CD4-positive, alpha-beta memory T cell (primary cell): ENCODE measurements at regions of chr7 and their contacts with region 1.

Region 1: DNA sequence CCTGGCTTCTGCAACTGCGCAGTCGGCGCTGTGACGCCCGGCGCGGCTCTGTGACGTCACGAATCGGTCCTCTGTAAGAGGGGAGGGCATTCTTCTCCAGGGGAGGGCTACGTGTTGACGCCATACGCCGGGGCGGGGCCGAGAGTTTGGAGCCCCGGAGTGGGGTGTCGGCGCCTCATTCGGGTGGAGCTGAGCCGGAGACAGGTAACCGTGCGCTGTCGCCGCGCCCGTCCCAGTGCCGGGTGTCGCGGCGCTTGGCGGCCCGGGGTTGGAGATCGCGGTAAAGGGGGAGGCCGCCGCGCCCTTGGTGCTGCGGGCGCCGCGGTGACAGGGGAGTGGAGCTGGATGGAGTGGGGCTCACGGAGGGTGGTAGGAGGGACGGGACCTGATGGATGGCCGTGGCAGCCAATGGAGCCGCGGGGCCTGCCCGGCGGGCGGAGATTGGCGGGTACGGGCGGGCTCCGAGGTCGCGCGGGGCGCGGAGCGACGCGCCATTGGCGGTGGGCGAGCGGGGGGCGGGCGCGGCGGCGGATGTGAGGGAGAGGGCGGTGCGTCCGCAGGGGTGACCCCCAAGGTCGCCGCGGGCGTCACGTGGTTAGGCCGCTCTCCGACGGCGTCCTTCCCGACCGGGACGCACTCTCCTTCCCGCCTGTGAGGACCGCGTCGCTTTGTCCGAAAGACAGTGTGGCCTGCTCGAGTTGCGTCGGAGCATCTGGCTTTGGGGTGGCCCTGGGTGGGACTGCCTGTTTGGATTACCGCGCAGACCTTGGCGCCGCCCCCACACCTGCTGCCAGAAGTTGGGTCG is at the start of gene OGDH:
- DNase-seq: peak; percentile 99 to 100 (median 100)
- H3K4me3 ChIP-seq: peak within 1 kb of the TSS; percentile 54 to 63
- H3K4me3 Mint-ChIP-seq: peak within 1 kb of the TSS; percentile 82 to 100 (median 98)
- H3K27ac ChIP-seq: peak within 1 kb of the TSS; percentile 97
- H3K27ac Mint-ChIP-seq: peak within 1 kb of the TSS; percentile 99 to 100 (median 99)
- H3K4me1 ChIP-seq: peaks cover 40% of the 10 kb centered on the region
- H3K4me1 Mint-ChIP-seq: peaks cover 19 to 50% (median 38%) of the 10 kb centered on the region in 4 donors
- H3K27me3 ChIP-seq: no peaks in the 10 kb centered on the region
- H3K27me3 Mint-ChIP-seq: peaks cover 0 to 2% of the 10 kb centered on the region in 2 donors
- total RNA-seq, gene OGDH: 116 to 126 TPM

Region 2: DNA sequence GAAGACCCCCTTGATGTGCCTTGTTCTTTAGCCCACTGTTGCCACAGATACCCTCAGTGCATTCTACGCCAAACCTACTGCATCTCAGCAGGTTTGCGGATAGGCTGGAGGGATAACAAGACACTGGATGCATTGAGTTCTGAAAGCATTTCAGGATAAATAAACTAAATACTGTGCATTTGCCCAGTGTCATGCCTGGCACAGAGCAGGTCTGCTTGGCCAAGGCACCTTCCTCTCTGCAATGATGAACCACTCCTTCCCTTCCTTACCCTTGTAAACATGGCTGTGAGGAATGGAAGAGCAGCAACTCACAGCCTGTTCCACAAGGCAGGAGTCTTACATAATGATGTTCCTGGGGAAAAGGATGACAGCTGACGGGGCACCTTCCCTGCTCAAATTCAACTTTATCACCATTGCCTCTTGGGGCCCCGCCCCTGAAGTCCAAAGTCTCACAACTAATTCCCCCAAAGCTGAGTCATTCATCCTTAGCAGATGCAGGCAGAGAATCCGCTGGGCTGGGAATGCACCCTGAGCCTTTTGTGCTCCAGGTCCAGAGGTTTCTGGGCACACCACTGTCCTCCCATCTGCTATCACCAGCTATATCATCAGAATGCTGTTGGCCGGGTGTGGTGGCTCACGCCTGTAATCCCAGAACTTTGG is 44.6 kb before region 1 on chr7:
- CTCF ChIA-PET with region 1: no interaction called
- POLR2A ChIA-PET with region 1: no interaction called
- intact Hi-C with region 1: no loop called
- DNase-seq: no peak
- H3K4me3 ChIP-seq: no peak overlapping the region
- H3K4me3 Mint-ChIP-seq: no peak overlapping the region
- H3K27ac ChIP-seq: no peak overlapping the region
- H3K27ac Mint-ChIP-seq: no peak overlapping the region
- H3K4me1 ChIP-seq: peaks cover 6% of the 10 kb centered on the region
- H3K4me1 Mint-ChIP-seq: peaks cover 1 to 10% (median 6%) of the 10 kb centered on the region in 4 donors
- H3K27me3 ChIP-seq: no peaks in the 10 kb centered on the region
- H3K27me3 Mint-ChIP-seq: no peaks in the 10 kb centered on the region

Region 3: GRCh38 chr7:44573464-44574286 is 33.0 kb before region 1 on chr7 and contains the start of gene DDX56:
- CTCF ChIA-PET with region 1: no interaction called
- POLR2A ChIA-PET with region 1: interaction called, 17 read pairs
- intact Hi-C with region 1: loop called (anchors 5 kb)
- DNase-seq: peak; percentile 87 to 93 (median 88)
- H3K4me3 ChIP-seq: peak within 1 kb of the TSS; percentile 93
- H3K4me3 Mint-ChIP-seq: peak within 1 kb of the TSS; percentile 94 to 99 (median 96)
- H3K27ac ChIP-seq: peak within 1 kb of the TSS; percentile 94
- H3K27ac Mint-ChIP-seq: peak within 1 kb of the TSS; percentile 97 to 99 (median 99)
- H3K4me1 ChIP-seq: peaks cover 30% of the 10 kb centered on the region
- H3K4me1 Mint-ChIP-seq: peaks cover 26 to 41% (median 34%) of the 10 kb centered on the region in 4 donors
- H3K27me3 ChIP-seq: no peaks in the 10 kb centered on the region
- H3K27me3 Mint-ChIP-seq: no peaks in the 10 kb centered on the region
- total RNA-seq, gene DDX56: 109 to 114 TPM

Region 4: DNA sequence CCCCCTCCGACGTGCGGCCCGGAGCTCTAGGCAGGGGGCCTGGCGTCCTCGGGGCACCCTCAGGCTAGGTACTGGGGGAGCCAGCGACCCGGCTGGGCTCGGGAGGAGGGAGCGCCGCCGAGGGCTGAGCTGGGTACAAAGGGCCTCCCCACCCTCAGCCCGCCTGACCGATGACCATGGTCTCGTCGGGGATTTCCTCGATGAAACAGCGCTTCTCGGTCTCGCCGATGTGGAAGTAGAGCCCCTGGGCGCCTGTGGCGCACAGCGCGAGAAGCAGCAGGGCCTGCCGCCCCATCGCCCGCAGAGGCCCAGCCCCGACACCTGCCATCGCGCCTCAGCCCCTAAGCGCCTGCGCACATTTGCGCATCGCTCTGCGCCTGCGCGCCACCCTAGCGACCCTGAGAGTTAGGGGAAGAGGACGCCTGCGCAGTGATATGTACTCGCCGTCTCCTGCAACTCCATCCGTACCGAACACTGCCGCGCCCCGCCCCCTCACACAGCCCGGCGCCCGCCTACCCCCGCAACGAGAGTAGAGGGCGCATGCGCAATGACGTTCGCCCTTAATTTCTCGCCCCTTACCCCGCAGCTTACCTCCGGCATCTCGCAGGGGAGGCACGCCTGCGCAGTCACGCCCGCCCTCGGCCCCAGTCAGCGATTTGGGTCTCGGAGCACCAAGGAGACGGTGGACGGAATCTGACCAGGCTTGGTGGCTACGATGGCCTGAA is 24.6 kb before region 1 on chr7 and contains the start of gene TMED4:
- CTCF ChIA-PET with region 1: interaction called, 3 read pairs
- POLR2A ChIA-PET with region 1: interaction called, 53 read pairs
- intact Hi-C with region 1: loop called (anchors 1 kb)
- DNase-seq: peak; percentile 100
- H3K4me3 ChIP-seq: peak within 1 kb of the TSS; percentile 79 to 98
- H3K4me3 Mint-ChIP-seq: peak within 1 kb of the TSS; percentile 90 to 95 (median 92)
- H3K27ac ChIP-seq: peak within 1 kb of the TSS; percentile 89
- H3K27ac Mint-ChIP-seq: peak within 1 kb of the TSS; percentile 97 to 99 (median 98)
- H3K4me1 ChIP-seq: peaks cover 34% of the 10 kb centered on the region
- H3K4me1 Mint-ChIP-seq: peaks cover 18 to 44% (median 32%) of the 10 kb centered on the region in 4 donors
- H3K27me3 ChIP-seq: no peaks in the 10 kb centered on the region
- H3K27me3 Mint-ChIP-seq: no peaks in the 10 kb centered on the region
- total RNA-seq, gene TMED4: 108 to 110 TPM

Region 5: GRCh38 chr7:44622307-44623151 is 15.9 kb after region 1 on chr7:
- CTCF ChIA-PET with region 1: interaction called, 8 read pairs
- POLR2A ChIA-PET with region 1: interaction called, 1,226 read pairs
- intact Hi-C with region 1: loop called (anchors 2 kb)
- DNase-seq: peak in 3 of 5 donors; percentile 35 to 60 (median 36)
- H3K4me3 ChIP-seq: peak overlapping the region in 1 of 2 donors; percentile 58
- H3K4me3 Mint-ChIP-seq: peak overlapping the region; percentile 57 to 95 (median 82)
- H3K27ac ChIP-seq: peak overlapping the region; percentile 74
- H3K27ac Mint-ChIP-seq: peak overlapping the region; percentile 91 to 99 (median 96)
- H3K4me1 ChIP-seq: peaks cover 98% of the 10 kb centered on the region
- H3K4me1 Mint-ChIP-seq: peaks cover 72 to 97% (median 86%) of the 10 kb centered on the region in 4 donors
- H3K27me3 ChIP-seq: no peaks in the 10 kb centered on the region
- H3K27me3 Mint-ChIP-seq: no peaks in the 10 kb centered on the region

Region 6: GRCh38 chr7:44633254-44634186 is 26.9 kb after region 1 on chr7:
- CTCF ChIA-PET with region 1: interaction called, 48 read pairs
- POLR2A ChIA-PET with region 1: interaction called, 1,226 read pairs
- intact Hi-C with region 1: loop called (anchors 1 kb)
- DNase-seq: peak; percentile 76 to 93 (median 85)
- H3K4me3 ChIP-seq: peak overlapping the region in 1 of 2 donors; percentile 30
- H3K4me3 Mint-ChIP-seq: peak overlapping the region; percentile 21 to 88 (median 75)
- H3K27ac ChIP-seq: peak overlapping the region; percentile 96
- H3K27ac Mint-ChIP-seq: peak overlapping the region; percentile 97 to 100 (median 100)
- H3K4me1 ChIP-seq: peaks cover 100% of the 10 kb centered on the region
- H3K4me1 Mint-ChIP-seq: peaks cover 66 to 98% (median 88%) of the 10 kb centered on the region in 4 donors
- H3K27me3 ChIP-seq: no peaks in the 10 kb centered on the region
- H3K27me3 Mint-ChIP-seq: no peaks in the 10 kb centered on the region

Region 7: GRCh38 chr7:44748045-44748947 is 141.6 kb after region 1 on chr7 and contains the start of gene ZMIZ2:
- CTCF ChIA-PET with region 1: no interaction called
- POLR2A ChIA-PET with region 1: interaction called, 20 read pairs
- intact Hi-C with region 1: loop called (anchors 1 kb)
- DNase-seq: peak; percentile 88 to 98 (median 92)
- H3K4me3 ChIP-seq: peak within 1 kb of the TSS; percentile 44 to 78
- H3K4me3 Mint-ChIP-seq: peak within 1 kb of the TSS; percentile 80 to 95 (median 86)
- H3K27ac ChIP-seq: peak within 1 kb of the TSS; percentile 90
- H3K27ac Mint-ChIP-seq: peak within 1 kb of the TSS; percentile 89 to 98 (median 96)
- H3K4me1 ChIP-seq: peaks cover 44% of the 10 kb centered on the region
- H3K4me1 Mint-ChIP-seq: peaks cover 33 to 51% (median 38%) of the 10 kb centered on the region in 4 donors
- H3K27me3 ChIP-seq: no peaks in the 10 kb centered on the region
- H3K27me3 Mint-ChIP-seq: no peaks in the 10 kb centered on the region
- total RNA-seq, gene ZMIZ2: 169 to 170 TPM

Region 8: DNA sequence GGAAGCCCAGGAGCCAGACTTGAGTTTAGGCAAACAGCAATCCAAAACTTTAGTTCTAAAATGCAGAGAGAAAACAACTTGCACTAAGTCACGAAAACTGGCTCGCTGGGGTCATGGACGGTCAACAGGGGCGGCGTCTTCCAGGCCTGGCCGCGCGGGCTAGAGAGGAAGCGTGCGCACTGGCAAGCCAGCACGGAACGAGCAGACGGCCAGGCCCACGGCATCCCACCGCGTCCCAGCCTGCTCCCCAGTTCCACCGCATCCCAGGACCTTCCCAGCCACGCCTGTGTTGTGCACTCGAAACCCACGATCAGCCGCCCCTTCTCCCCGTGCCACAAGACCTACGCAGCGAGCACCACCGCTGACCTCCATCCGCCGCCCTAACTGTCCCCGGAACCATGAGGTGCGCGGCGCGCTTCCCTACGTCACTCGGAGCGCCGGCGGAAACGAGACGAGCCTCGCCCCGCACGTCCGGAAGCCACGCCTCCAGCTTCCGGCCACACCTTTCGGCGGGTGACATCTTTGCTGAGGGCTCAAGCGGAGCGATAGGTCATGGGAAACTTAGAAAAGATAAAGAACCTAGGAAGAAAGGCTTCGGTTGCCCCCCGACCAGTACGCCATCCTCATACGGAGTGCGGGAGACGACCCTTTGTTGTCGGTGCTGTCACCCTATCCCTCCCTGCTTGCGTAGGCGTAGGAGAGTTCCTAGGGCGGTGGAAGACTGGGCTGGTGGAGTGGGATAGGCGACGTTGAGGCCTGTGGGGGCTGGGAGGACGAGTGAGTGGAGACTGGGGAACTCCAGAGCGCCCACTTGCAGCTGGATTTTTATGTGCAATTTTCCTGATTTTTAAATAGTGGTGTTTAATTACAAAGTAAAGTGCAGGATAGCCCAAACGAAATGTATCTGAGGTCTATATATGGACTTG is 504.9 kb after region 1 on chr7 and contains the start of gene TBRG4:
- CTCF ChIA-PET with region 1: no interaction called
- POLR2A ChIA-PET with region 1: no interaction called
- intact Hi-C with region 1: loop called (anchors 1 kb)
- DNase-seq: peak; percentile 91 to 94 (median 94)
- H3K4me3 ChIP-seq: peak within 1 kb of the TSS; percentile 94 to 95
- H3K4me3 Mint-ChIP-seq: peak within 1 kb of the TSS; percentile 91 to 99 (median 97)
- H3K27ac ChIP-seq: peak within 1 kb of the TSS; percentile 87
- H3K27ac Mint-ChIP-seq: peak within 1 kb of the TSS; percentile 97 to 100 (median 99)
- H3K4me1 ChIP-seq: peaks cover 48% of the 10 kb centered on the region
- H3K4me1 Mint-ChIP-seq: peaks cover 28 to 60% (median 44%) of the 10 kb centered on the region in 4 donors
- H3K27me3 ChIP-seq: no peaks in the 10 kb centered on the region
- H3K27me3 Mint-ChIP-seq: peaks cover 4% of the 10 kb centered on the region in 2 donors
- total RNA-seq, gene TBRG4: 103 to 129 TPM